ENCODE measurements at regions of chr3 and their contacts with region 1.

Region 1: DNA sequence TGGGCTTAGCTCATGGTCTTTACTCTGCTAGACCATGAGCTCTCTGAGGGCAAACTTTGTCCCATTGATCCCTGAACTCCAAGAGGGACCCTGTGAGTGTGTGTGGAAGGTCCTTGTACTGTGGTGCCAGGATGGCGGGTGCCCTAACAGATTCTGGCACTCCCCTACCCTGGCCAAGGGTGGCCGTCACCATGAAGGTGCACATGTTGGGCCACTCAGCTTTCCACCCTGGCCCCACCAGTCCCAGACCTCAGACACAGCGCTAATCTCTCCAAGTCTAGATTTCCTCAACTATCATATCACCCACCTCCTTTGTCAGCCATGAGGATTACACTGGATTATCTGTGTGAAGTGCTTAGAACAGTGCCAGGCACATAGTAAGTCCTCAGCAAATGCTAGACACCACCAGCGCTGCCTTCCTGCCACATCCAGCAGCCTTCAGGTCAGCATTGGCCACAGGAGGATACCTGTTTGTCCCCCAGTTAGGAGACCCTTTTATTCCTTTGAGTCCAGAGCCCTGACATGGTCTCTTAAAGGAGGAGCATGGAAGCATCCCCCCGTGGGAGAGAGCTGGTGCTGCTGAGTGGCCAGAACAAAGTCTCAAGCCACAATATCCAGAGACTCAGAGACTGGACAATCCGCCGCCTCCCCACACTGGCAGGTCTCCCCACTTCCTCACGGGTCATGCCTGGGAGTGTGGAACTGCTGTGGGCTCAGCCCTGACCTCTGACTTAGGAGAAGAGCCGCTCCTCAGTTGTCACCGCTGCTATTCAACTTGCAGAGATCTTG is 44.5 kb upstream of the SLCO2A1 start:
- DNase-seq: no peak
- ATAC-seq: no peak
- H3K4me3 ChIP-seq: no peak overlapping the region
- H3K27ac ChIP-seq: no peak overlapping the region
- H3K4me1 ChIP-seq: peaks cover 4% of the 10 kb centered on the region; the same call in 1 of the 2 replicates
- H3K27me3 ChIP-seq: no peaks in the 10 kb centered on the region
- CTCF ChIP-seq: no peak

Region 2: GRCh38 chr3:134094491-134094890 is 20.3 kb after region 1 on chr3:
- CTCF ChIA-PET with region 1: no interaction called
- POLR2A ChIA-PET with region 1: interaction called, 11 read pairs
- intact Hi-C with region 1: no loop called
- DNase-seq: no peak
- ATAC-seq: no peak
- H3K4me3 ChIP-seq: no peak overlapping the region
- H3K27ac ChIP-seq: no peak overlapping the region
- H3K4me1 ChIP-seq: no peaks in the 10 kb centered on the region
- H3K27me3 ChIP-seq: no peaks in the 10 kb centered on the region
- CTCF ChIP-seq: no peak

Measured in PC-3 (cell line).